Activated naive CD4-positive, alpha-beta T cell treated with anti-CD3 and anti-CD28 coated beads for 36 hours (primary cell): ENCODE measurements at regions of chr13 and their contacts with region 1.

Region 1: DNA sequence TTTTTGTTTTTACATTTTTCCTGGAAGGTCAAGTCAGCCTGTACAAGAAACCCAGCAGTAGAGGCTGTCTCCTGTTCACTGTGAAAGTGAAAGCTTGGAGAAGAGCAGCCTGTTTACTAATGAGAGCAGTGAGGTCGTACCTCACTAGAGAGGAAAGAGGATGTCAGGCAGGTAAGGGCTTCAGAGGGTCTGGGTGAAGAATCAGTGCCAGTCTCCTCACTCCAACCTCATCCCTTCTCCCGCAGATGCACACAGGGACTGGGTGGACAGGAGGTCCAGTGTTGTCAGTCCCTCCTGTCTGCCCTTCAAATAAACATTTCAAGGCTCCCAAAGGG is 462.5 kb downstream of the KLF5 start:
- DNase-seq: peak; percentile 10
- H3K4me3 Mint-ChIP-seq: peak overlapping the region; percentile 62
- H3K27ac Mint-ChIP-seq: peak overlapping the region; percentile 57
- H3K4me1 Mint-ChIP-seq: peaks cover 22% of the 10 kb centered on the region
- H3K27me3 Mint-ChIP-seq: no peaks in the 10 kb centered on the region

Region 2: DNA sequence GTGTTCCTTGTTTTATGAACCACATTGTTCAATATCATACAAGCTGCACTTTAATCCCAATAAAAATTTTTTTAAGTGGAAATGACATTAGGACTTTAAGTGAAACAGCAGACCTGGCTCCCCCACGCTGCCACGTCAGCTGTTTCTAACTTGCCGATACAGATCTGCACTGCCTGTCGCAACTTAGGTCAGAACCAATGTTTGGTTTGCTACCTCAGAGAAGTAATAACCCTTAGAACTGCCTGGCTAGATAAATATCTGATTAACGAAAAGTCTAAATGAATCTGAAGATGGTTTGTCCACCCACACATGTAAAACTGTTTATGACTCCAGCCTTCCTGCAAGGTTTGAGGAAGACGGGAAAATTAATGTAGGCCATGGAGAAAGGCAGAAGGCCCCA is 1326.7 kb before region 1 on chr13:
- CTCF ChIA-PET with region 1: no interaction called
- intact Hi-C with region 1: no loop called
- DNase-seq: no peak
- H3K4me3 Mint-ChIP-seq: no peak overlapping the region
- H3K27ac Mint-ChIP-seq: no peak overlapping the region
- H3K4me1 Mint-ChIP-seq: no peaks in the 10 kb centered on the region
- H3K27me3 Mint-ChIP-seq: no peaks in the 10 kb centered on the region

Region 3: GRCh38 chr13:73625562-73626339 is 104.5 kb after region 1 on chr13:
- CTCF ChIA-PET with region 1: no interaction called
- intact Hi-C with region 1: no loop called
- DNase-seq: peak; percentile 26
- H3K4me3 Mint-ChIP-seq: peak overlapping the region; percentile 37
- H3K27ac Mint-ChIP-seq: no peak overlapping the region
- H3K4me1 Mint-ChIP-seq: peaks cover 36% of the 10 kb centered on the region
- H3K27me3 Mint-ChIP-seq: no peaks in the 10 kb centered on the region

Region 4: GRCh38 chr13:73647417-73647816 is 126.2 kb after region 1 on chr13:
- CTCF ChIA-PET with region 1: no interaction called
- intact Hi-C with region 1: no loop called
- DNase-seq: no peak
- H3K4me3 Mint-ChIP-seq: no peak overlapping the region
- H3K27ac Mint-ChIP-seq: no peak overlapping the region
- H3K4me1 Mint-ChIP-seq: no peaks in the 10 kb centered on the region
- H3K27me3 Mint-ChIP-seq: no peaks in the 10 kb centered on the region

Region 5: DNA sequence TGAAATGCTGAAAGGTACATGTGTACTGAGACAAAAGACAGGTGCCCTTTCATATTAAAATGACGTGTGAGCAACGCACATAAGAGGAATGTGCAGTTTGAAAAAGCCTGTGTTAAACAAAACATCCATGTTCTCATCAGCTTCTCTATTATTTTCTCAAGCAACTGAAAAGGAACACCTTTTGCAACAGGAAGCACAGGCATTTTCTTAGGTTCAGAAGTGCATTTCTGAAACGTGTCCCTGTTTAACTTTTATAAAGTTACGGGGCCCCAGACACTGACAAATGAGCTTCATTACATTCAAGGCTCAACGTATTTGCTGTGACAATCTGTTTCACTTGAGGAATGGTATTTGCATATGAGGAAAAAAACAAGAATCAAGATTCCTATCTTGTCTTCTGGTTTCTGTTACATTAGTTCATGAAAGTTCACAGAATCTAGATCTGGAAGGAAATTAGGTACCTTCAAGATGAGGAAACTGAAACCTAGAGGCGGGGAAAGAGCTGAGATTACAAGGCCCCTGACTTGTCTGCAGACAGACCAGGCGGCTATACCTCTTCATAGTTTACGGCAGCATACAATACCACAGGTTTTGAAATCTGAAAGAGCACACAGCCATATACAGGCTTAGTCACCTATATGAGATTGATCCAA is 181.3 kb after region 1 on chr13:
- CTCF ChIA-PET with region 1: no interaction called
- intact Hi-C with region 1: loop called (anchors 2 kb)
- DNase-seq: peak; percentile 61
- H3K4me3 Mint-ChIP-seq: peak overlapping the region; percentile 62
- H3K27ac Mint-ChIP-seq: peak overlapping the region; percentile 71
- H3K4me1 Mint-ChIP-seq: peaks cover 41% of the 10 kb centered on the region
- H3K27me3 Mint-ChIP-seq: no peaks in the 10 kb centered on the region

Region 6: DNA sequence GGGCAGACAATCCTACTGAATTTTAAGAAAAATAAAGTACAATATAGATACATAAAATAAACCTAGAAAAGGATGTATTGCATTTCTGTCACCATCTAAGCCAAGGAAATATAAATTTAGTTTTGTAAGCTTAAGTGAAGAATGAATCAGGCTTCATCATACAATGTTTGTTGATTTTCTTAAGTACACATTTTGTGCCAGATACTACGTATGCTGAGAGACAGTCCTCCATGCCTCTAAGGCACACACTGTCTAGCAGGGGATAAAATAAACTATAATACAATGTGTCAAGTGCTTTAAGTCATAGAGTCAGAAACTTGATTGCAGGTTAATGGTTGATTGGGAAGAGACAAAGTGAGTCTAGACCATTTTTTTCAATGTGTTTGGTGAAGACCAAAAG is 1495.0 kb after region 1 on chr13:
- CTCF ChIA-PET with region 1: no interaction called
- intact Hi-C with region 1: no loop called
- DNase-seq: no peak
- H3K4me3 Mint-ChIP-seq: no peak overlapping the region
- H3K27ac Mint-ChIP-seq: no peak overlapping the region
- H3K4me1 Mint-ChIP-seq: no peaks in the 10 kb centered on the region
- H3K27me3 Mint-ChIP-seq: peaks cover 12% of the 10 kb centered on the region